ENCODE measurements at regions of chr4 and their contacts with region 1.

Region 1: DNA sequence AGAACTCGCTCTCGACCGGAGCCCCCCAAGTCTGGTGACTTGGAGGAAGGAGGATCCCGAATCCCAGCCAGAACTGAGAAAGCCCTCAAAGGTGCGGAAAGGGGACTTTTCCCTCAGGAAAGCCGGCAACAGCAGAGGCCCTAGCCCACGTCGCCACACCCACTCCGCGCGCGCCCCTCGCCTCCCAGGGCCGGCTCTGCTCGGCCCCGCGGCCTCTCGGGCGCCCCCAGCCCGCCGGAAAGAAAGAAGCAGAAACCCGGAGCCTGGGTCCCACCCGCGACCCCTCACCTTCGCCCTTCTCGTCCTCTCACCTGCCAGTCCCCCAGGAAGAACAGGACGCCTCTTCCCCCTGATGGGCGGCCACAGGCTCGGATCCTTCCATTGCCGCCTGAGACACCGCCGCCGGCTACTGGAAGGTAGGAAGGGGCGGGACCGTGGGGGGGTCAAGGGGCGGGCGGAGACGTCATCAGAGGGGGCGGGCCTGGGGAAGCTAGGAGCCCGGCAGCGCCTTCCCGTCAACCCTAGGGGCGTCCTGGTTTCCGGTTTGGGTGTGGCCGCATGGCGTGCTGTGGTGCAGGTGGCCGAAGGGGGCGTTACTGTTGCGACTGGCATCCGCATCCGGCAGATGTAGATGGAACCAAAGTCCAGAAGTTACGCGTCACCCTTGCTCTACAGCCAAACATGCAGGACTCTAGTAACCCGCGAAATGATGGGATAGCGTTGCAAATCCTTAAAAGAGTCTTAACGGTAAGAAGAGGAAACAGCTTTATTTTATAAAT is at the start of gene UBA6:
- DNase-seq: peak; percentile 94
- H3K4me3 Mint-ChIP-seq: peak within 1 kb of the TSS; percentile 99
- H3K27ac Mint-ChIP-seq: peak within 1 kb of the TSS; percentile 96
- H3K4me1 Mint-ChIP-seq: peaks cover 68% of the 10 kb centered on the region
- H3K27me3 Mint-ChIP-seq: no peaks in the 10 kb centered on the region
- total RNA-seq, gene UBA6: 78.2 and 78.5 TPM in 2 replicates

Region 2: DNA sequence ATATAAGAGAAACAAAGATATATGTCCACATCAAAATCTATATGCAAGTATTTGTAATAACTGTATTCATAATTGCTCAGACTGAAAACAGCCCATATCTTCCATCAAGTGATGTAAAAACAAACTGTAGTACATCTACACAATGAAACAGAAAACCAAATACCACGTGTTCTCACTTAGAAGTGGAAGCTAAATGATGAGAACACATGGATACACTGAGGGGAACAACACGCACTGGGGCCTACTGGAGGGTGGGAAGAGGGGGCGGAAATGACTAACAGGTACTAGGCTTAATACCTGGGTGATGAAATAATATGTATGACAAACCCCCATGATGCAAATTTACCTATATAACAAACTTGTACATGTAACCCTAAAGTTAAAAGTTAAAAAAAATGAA is 42.6 kb before region 1 on chr4:
- intact Hi-C with region 1: loop called (anchors 1 kb)
- DNase-seq: no peak
- H3K4me3 Mint-ChIP-seq: no peak overlapping the region
- H3K27ac Mint-ChIP-seq: no peak overlapping the region
- H3K4me1 Mint-ChIP-seq: peaks cover 12% of the 10 kb centered on the region
- H3K27me3 Mint-ChIP-seq: no peaks in the 10 kb centered on the region

Region 3: DNA sequence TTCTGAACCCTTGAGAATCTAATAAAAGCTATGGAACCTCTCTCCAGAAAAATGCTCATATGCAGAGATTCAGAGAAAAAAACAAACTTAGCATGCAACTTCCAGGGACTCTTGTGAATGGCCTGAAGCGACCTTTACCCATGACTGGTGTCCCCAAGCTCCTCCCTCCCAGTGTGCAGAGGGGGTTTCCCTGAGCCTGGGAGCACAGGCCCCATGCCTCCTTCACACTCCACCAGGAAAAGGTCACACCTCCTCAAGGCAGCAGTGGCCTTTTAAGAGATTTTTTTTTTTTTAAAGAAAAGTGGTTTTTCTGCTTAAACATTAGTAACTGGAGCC is 13.3 kb after region 1 on chr4:
- intact Hi-C with region 1: loop called (anchors 2 kb)
- DNase-seq: no peak
- H3K4me3 Mint-ChIP-seq: peak overlapping the region; percentile 5
- H3K27ac Mint-ChIP-seq: peak overlapping the region; percentile 81
- H3K4me1 Mint-ChIP-seq: peaks cover 33% of the 10 kb centered on the region
- H3K27me3 Mint-ChIP-seq: no peaks in the 10 kb centered on the region

Region 4: GRCh38 chr4:67909905-67910584 is 209.1 kb after region 1 on chr4:
- intact Hi-C with region 1: loop called (anchors 2 kb)
- DNase-seq: no peak
- H3K4me3 Mint-ChIP-seq: no peak overlapping the region
- H3K27ac Mint-ChIP-seq: no peak overlapping the region
- H3K4me1 Mint-ChIP-seq: no peaks in the 10 kb centered on the region
- H3K27me3 Mint-ChIP-seq: peaks cover 12% of the 10 kb centered on the region

Region 5: DNA sequence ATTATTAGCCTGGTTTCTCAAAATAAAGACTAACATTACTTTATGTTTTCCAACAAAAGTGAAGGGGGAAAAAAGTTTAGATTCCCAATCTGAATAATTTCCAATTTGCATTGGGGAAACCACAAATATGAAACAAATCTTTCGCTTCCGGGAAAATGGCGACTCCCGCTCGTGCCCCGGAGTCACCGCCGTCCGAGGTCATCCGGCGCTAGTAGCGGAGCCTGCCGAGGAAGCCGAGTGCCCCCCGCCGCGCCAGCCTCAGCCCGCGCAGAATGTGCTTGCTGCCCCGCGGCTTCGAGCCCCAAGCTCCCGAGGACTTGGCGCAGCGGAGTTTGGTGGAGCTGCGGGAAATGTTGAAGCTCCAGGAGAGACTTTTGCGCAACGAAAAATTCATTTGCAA is 337.3 kb after region 1 on chr4:
- intact Hi-C with region 1: no loop called
- DNase-seq: no peak
- H3K4me3 Mint-ChIP-seq: no peak overlapping the region
- H3K27ac Mint-ChIP-seq: no peak overlapping the region
- H3K4me1 Mint-ChIP-seq: no peaks in the 10 kb centered on the region
- H3K27me3 Mint-ChIP-seq: no peaks in the 10 kb centered on the region

Measured in activated T-helper 1 cell treated with anti-CD3 and anti-CD28 coated beads, Interleukin-12 subunit alpha, Interleukin-12 subunit beta, Interleukin-2, Interleukin-4 antibody, amounts not matched to agents 30 ng/mL and 10 ng/mL and 1 ng/mL, durations not matched to agents 14 hours and 24 hours and 36 hours (primary cell).